Left colon (tissue), 2 donors: ENCODE measurements at regions of chr3 and their contacts with region 1.

Region 1: GRCh38 chr3:146577662-146578061 is 27.5 kb downstream of the PLSCR5 start:
- DNase-seq: peak in 1 of 2 donors; percentile 26
- ATAC-seq: peak; percentile 76

Region 2: GRCh38 chr3:146241523-146242240 is 336.0 kb before region 1 on chr3:
- intact Hi-C with region 1: no loop called
- DNase-seq: no peak
- ATAC-seq: no peak

Region 3: DNA sequence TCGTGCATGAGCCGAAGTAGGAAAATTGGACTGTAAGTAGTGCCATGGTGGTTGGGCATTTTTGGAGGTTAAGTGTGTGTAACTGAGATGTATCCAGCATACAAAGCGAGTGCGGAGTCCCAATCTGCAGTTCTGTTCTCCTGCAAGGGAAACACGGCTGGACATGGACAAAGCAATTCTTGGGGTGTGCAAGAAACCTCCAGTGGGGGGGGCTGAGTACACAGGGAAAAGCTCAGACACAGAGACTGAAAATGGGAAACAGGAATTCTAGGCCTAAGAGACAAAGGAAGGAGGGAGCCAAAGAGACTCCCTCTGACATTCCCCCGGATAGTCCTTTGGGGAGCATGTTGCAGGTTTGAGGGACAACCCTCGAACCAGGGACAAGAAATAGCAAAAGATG is 243.5 kb before region 1 on chr3:
- intact Hi-C with region 1: loop called in 1 of 2 experiments (anchors 10 kb)
- DNase-seq: peak in 1 of 2 donors; percentile 17
- ATAC-seq: no peak